Panc1 (cell line): ENCODE measurements at regions of chr17 and their contacts with region 1.

Region 1: GRCh38 chr17:75309025-75309772 is 20.0 kb upstream of the SLC25A19 start:
- DNase-seq: no peak
- ATAC-seq: peak; percentile 70
- H3K4me3 ChIP-seq: no peak overlapping the region
- H3K27ac ChIP-seq: no peak overlapping the region
- H3K4me1 ChIP-seq: no peaks in the 10 kb centered on the region
- H3K27me3 ChIP-seq: no peaks in the 10 kb centered on the region
- CTCF ChIP-seq: no peak

Region 2: GRCh38 chr17:75289115-75289831 is 19.9 kb before region 1 on chr17 and contains the start of gene SLC25A19:
- CTCF ChIA-PET with region 1: interaction called, 11 read pairs
- POLR2A ChIA-PET with region 1: interaction called, 4 read pairs
- in situ Hi-C with region 1: no loop called
- intact Hi-C with region 1: no loop called
- DNase-seq: peak; percentile 96
- ATAC-seq: peak; percentile 99
- H3K4me3 ChIP-seq: peak within 1 kb of the TSS; percentile 77 to 93
- H3K27ac ChIP-seq: peak within 1 kb of the TSS; percentile 90
- H3K4me1 ChIP-seq: peaks cover 5% of the 10 kb centered on the region
- H3K27me3 ChIP-seq: no peaks in the 10 kb centered on the region
- CTCF ChIP-seq: no peak; the same call in 1 of the 2 replicates
- total RNA-seq, gene SLC25A19: 29.0 TPM